Heart right ventricle (tissue), 16 donors: ENCODE measurements at regions of chr10 and their contacts with region 1.

Region 1: GRCh38 chr10:101291331-101292193 is 62.3 kb upstream of the LBX1 start:
- DNase-seq: peak; percentile 59 to 69
- ATAC-seq: peak; percentile 76 to 84 (median 80)
- H3K4me3 ChIP-seq: peak overlapping the region; percentile 41 to 67 (median 62)
- H3K27ac ChIP-seq: peak overlapping the region in 6 of 10 donors; percentile 53 to 81 (median 68)
- H3K4me1 ChIP-seq: peaks cover 0 to 22% (median 12%) of the 10 kb centered on the region in 9 donors
- H3K27me3 ChIP-seq: peaks cover 5 to 97% (median 68%) of the 10 kb centered on the region in 7 donors
- CTCF ChIP-seq: peak; percentile 32 to 78 (median 68)

Region 2: GRCh38 chr10:101222683-101223273 is 68.8 kb before region 1 on chr10:
- intact Hi-C with region 1: loop called in 6 of 10 experiments (anchors 5 to 10 kb)
- DNase-seq: no peak
- ATAC-seq: peak in 5 of 8 donors; percentile 9 to 46 (median 27)
- H3K4me3 ChIP-seq: peak overlapping the region in 9 of 10 donors; percentile 22 to 52 (median 43)
- H3K27ac ChIP-seq: no peak overlapping the region
- H3K4me1 ChIP-seq: peaks cover 15 to 55% (median 48%) of the 10 kb centered on the region in 9 donors
- H3K27me3 ChIP-seq: peaks cover 84 to 100% (median 100%) of the 10 kb centered on the region in 7 donors
- CTCF ChIP-seq: no peak

Region 3: GRCh38 chr10:101394524-101395133 is 103.1 kb after region 1 on chr10:
- intact Hi-C with region 1: no loop called
- DNase-seq: no peak
- ATAC-seq: peak in 6 of 8 donors; percentile 59 to 75 (median 64)
- H3K4me3 ChIP-seq: no peak overlapping the region
- H3K27ac ChIP-seq: peak overlapping the region in 2 of 10 donors; percentile 35 to 37
- H3K4me1 ChIP-seq: peaks cover 0 to 39% (median 20%) of the 10 kb centered on the region in 9 donors
- H3K27me3 ChIP-seq: no peaks in the 10 kb centered on the region
- CTCF ChIP-seq: no peak

Region 4: DNA sequence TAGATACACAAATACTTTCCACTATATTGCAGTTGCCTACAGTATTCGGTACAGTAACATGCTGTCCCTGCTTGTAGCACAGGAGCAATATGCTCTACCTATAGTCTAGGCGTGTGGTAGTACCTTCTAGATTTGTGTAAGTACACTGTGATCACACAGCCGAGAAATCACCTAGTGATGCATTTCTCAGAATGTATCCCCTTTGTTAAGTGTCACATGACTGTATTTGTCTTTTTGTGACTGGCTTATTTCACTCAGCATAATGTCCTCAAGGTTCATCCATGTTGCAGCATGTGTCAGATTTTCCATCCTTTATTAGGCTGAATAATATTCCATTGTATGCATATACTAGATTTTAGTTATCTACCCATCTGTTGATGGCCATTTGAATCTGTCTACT is 124.3 kb after region 1 on chr10:
- intact Hi-C with region 1: no loop called
- DNase-seq: no peak
- ATAC-seq: no peak
- H3K4me3 ChIP-seq: no peak overlapping the region
- H3K27ac ChIP-seq: no peak overlapping the region
- H3K4me1 ChIP-seq: peaks cover 0 to 8% (median 0%) of the 10 kb centered on the region in 9 donors
- H3K27me3 ChIP-seq: no peaks in the 10 kb centered on the region
- CTCF ChIP-seq: no peak

Region 5: DNA sequence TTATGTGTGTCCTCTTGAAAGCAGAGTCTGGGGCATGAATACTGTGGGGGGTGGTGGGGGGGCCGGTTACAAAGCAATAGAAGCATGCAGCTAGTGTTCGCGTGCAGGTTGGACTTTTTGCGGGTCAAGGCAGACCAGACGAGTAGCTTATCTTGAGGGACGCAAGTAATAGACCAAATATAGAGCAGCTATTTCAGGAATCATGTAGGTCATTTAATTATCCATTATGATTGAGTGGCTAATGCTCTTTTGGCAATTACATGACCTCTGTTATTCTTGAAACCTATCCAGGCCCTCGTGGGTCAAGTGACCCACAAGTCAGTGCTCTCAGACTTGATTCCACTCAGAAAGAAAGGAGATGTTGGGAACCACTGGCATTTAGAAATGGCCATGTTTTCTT is 155.4 kb after region 1 on chr10:
- intact Hi-C with region 1: loop called in 4 of 10 experiments (anchors 2 to 10 kb)
- DNase-seq: peak; percentile 11 to 14
- ATAC-seq: peak; percentile 34 to 91 (median 82)
- H3K4me3 ChIP-seq: no peak overlapping the region
- H3K27ac ChIP-seq: peak overlapping the region in 6 of 10 donors; percentile 47 to 61 (median 59)
- H3K4me1 ChIP-seq: peaks cover 0 to 49% (median 29%) of the 10 kb centered on the region in 9 donors
- H3K27me3 ChIP-seq: no peaks in the 10 kb centered on the region
- CTCF ChIP-seq: no peak